ENCODE measurements at regions of chr13 and their contacts with region 1.

Region 1: DNA sequence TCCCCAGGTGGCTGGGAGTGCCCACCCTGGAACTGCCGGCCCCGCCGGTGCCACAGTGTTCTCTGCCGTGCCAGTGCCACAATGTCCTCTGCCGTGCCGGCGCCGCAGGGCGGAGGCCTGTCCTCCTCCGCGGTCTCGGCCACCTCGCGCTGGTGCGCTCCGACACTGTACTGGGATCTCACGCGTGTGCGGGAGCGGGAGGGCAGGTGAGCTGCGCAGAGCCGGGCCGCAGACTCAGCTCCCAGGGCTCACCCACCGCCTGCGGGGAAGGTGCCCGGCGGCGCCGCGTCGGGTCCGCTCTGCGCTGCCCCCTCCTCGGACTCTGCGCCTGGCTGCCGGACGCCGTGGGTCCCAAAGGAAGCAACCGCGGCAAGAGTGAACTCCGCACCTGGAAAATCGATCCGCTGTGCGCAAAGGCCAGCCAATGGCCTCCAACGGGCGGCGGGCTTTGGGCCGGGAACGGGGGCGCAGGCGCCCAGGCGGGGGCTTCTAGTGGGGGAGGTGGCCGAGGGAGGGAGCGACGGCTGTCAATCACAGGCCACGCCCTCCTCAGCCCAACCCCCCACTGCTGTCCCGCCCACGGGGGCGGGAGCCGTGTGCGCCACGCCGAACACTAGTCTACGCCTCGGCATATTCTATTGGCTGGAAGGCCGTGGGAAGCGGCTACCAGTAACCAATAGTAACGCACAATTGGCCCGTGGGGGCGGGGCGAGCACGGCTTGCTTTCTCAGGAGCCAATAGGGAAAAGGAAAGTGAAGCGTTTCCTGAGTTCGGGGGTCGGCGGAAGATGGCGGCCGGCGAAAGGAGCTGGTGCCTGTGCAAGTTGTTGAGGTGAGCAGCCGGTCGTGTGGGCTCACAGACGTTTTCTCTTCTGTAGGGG is at the start of gene ALG11:
- DNase-seq: peak; percentile 100
- H3K4me3 Mint-ChIP-seq: peak within 1 kb of the TSS; percentile 99
- H3K27ac Mint-ChIP-seq: peak within 1 kb of the TSS; percentile 88
- H3K4me1 Mint-ChIP-seq: peaks cover 13% of the 10 kb centered on the region
- H3K27me3 Mint-ChIP-seq: peaks cover 34% of the 10 kb centered on the region
- total RNA-seq, gene ALG11: 24.7 and 28.6 TPM in 2 replicates

Region 2: DNA sequence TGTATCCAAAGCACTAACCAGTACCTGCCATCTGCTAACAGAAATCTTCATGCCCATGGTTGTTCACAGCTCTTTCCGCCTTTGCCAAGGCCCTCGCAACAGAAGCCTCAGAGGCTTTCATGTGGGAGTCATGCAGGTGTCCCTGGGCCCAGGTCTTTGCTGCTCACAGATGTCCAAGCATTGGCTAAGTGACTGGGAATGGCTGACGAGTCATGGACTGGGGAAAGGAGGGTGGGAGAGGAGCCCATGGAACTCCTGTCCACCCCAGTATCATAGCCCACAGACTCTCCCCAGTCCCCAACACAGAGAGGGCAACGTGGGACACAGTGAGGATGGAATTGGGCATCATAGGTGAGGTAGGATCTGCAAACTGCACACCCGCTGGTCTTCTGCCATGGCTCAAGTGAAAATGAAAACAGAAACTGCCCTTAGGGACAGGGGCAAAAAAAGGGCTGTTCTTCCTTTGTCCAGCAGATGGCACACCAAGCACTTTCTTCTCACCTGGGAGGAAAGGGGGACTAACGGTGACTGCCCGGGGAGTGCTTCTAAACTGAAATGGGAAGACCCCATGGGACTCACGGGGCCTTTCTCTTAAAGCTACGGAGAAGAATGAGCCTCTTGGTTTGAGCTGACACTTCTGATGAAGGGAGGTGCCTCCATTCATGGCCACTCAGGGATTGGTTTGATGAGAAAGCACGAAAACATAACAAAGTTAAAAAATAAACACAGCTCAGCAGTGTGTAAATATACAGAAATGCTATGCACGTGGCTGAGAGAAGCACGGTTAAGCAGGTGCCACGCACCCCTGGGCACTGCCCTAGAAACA is 196.8 kb before region 1 on chr13:
- intact Hi-C with region 1: loop called (anchors 2 kb)
- DNase-seq: peak; percentile 66
- H3K4me3 Mint-ChIP-seq: peak overlapping the region; percentile 37
- H3K27ac Mint-ChIP-seq: no peak overlapping the region
- H3K4me1 Mint-ChIP-seq: peaks cover 52% of the 10 kb centered on the region
- H3K27me3 Mint-ChIP-seq: peaks cover 3% of the 10 kb centered on the region

Region 3: GRCh38 chr13:51895906-51896888 is 115.7 kb before region 1 on chr13:
- intact Hi-C with region 1: loop called (anchors 5 kb)
- DNase-seq: peak; percentile 14
- H3K4me3 Mint-ChIP-seq: no peak overlapping the region
- H3K27ac Mint-ChIP-seq: no peak overlapping the region
- H3K4me1 Mint-ChIP-seq: peaks cover 4% of the 10 kb centered on the region
- H3K27me3 Mint-ChIP-seq: peaks cover 16% of the 10 kb centered on the region

Region 4: GRCh38 chr13:51959773-51960172 is 52.1 kb before region 1 on chr13:
- intact Hi-C with region 1: no loop called
- DNase-seq: no peak
- H3K4me3 Mint-ChIP-seq: no peak overlapping the region
- H3K27ac Mint-ChIP-seq: no peak overlapping the region
- H3K4me1 Mint-ChIP-seq: peaks cover 36% of the 10 kb centered on the region
- H3K27me3 Mint-ChIP-seq: peaks cover 1% of the 10 kb centered on the region

Region 5: DNA sequence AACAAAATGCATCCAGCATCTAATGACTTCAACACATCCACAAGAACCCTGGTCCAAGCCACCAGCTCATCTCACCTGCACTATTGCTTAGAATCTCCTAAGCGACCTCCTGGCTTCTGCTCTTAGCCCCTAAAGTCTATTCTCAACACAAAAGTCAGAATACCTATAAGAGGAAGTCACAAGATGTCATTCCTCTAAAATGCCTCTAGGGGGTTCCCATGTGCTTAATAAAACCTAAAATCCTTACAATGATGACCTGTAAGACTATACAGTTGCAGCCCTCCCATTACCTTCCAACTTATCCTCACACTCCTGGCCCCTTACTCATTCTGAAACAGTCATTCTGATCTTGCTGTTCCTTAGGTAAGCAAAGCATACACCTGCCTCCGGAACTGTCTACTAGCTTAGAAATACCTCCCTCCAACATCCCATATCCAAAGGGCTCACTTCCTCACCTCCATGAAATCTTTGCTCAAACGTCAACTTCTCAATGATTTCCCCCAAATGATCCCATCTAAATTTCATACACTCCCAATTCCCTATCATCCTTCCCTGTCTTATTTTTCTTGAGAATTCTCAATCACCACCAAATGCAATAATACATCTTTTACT is 10.6 kb before region 1 on chr13:
- intact Hi-C with region 1: loop called (anchors 1 kb)
- DNase-seq: no peak
- H3K4me3 Mint-ChIP-seq: no peak overlapping the region
- H3K27ac Mint-ChIP-seq: no peak overlapping the region
- H3K4me1 Mint-ChIP-seq: no peaks in the 10 kb centered on the region
- H3K27me3 Mint-ChIP-seq: peaks cover 22% of the 10 kb centered on the region

Region 6: DNA sequence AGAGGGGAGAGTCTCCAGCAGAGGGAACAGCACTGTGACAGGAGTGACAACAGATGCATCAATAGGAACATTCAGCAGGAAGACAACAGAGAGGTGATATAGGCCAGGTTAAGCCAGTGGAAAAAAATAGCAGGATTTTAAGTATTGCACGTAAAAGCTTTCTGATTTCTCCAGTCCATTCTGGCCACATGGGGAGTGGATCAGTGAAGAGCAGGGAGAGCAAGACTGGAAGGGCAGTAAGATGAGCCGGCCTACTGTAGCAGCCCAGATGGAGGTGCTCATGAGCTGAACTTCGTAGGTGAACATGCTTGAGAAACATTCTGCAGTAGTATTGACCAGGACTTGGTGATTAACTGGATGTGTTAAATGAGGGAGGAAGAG is 14.4 kb after region 1 on chr13:
- intact Hi-C with region 1: no loop called
- DNase-seq: no peak
- H3K4me3 Mint-ChIP-seq: no peak overlapping the region
- H3K27ac Mint-ChIP-seq: no peak overlapping the region
- H3K4me1 Mint-ChIP-seq: peaks cover 14% of the 10 kb centered on the region
- H3K27me3 Mint-ChIP-seq: no peaks in the 10 kb centered on the region

Region 7: GRCh38 chr13:52159321-52160086 is 147.6 kb after region 1 on chr13 and contains the start of gene NEK3:
- intact Hi-C with region 1: loop called (anchors 1 kb)
- DNase-seq: peak; percentile 57
- H3K4me3 Mint-ChIP-seq: peak within 1 kb of the TSS; percentile 87
- H3K27ac Mint-ChIP-seq: peak within 1 kb of the TSS; percentile 76
- H3K4me1 Mint-ChIP-seq: peaks cover 51% of the 10 kb centered on the region
- H3K27me3 Mint-ChIP-seq: no peaks in the 10 kb centered on the region
- total RNA-seq, gene NEK3: 10.5 and 12.0 TPM in 2 replicates

Region 8: DNA sequence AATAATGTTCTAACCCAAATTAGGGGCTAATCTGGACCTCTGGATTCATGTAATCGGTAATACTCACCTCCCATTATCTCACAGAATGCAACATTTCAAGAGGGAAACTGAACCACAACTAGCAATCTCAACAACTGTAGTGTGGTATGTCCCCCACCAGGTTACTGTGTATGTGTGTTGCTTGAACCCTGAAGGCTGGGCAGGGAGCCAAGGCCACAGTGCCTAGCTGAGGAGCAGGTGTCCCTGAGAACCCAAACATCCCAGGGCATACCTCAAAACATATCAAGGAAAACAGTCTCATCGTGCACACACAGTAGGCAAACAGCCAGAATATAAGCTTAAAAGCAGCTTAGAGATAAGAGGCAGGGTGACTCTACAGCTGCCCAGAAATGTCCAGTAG is 168.1 kb after region 1 on chr13:
- intact Hi-C with region 1: no loop called
- DNase-seq: no peak
- H3K4me3 Mint-ChIP-seq: no peak overlapping the region
- H3K27ac Mint-ChIP-seq: no peak overlapping the region
- H3K4me1 Mint-ChIP-seq: no peaks in the 10 kb centered on the region
- H3K27me3 Mint-ChIP-seq: no peaks in the 10 kb centered on the region

Region 9: GRCh38 chr13:52652196-52652979 is 640.5 kb after region 1 on chr13 and contains the start of gene SUGT1:
- intact Hi-C with region 1: loop called (anchors 1 kb)
- DNase-seq: peak; percentile 93
- H3K4me3 Mint-ChIP-seq: no peak within 1 kb of the TSS
- H3K27ac Mint-ChIP-seq: no peak within 1 kb of the TSS
- H3K4me1 Mint-ChIP-seq: peaks cover 15% of the 10 kb centered on the region
- H3K27me3 Mint-ChIP-seq: no peaks in the 10 kb centered on the region
- total RNA-seq, gene SUGT1: 63.3 and 66.1 TPM in 2 replicates

Measured in activated T-helper 1 cell treated with anti-CD3 and anti-CD28 coated beads, Interleukin-12 subunit alpha, Interleukin-12 subunit beta, Interleukin-2, Interleukin-4 antibody, amounts not matched to agents 30 ng/mL and 10 ng/mL and 1 ng/mL, durations not matched to agents 14 hours and 24 hours and 36 hours (primary cell).